ENCODE measurements at regions of chr5 and their contacts with region 1.

Region 1: DNA sequence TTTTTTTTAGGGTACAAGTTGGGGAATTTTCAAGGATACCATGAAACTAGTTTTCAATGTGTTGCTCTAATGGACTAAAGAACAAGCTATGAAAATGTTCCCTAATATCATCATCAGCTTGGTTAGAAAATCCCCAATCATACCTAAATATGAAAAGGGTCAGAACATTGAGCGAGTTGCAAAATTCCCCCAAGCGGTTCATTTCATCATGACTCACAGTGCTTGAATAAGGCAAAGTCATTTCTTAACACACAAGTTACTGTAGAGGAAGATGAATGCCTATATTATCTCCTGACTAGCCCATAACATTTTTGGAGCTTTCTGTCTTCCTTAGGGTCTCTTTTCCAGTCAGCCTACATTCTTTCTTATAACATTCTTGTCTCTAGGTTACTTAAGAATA is 62.7 kb downstream of the ST8SIA4 start:
- DNase-seq: no peak
- ATAC-seq: no peak
- H3K4me3 ChIP-seq: no peak overlapping the region
- H3K27ac ChIP-seq: no peak overlapping the region
- H3K4me1 ChIP-seq: no peaks in the 10 kb centered on the region
- H3K27me3 ChIP-seq: no peaks in the 10 kb centered on the region

Region 2: GRCh38 chr5:100890461-100891008 is 50.2 kb after region 1 on chr5:
- intact Hi-C with region 1: loop called in 1 of 4 experiments (anchors 10 kb)
- DNase-seq: no peak
- ATAC-seq: no peak
- H3K4me3 ChIP-seq: peak overlapping the region; percentile 56
- H3K27ac ChIP-seq: no peak overlapping the region
- H3K4me1 ChIP-seq: peaks cover 2% of the 10 kb centered on the region
- H3K27me3 ChIP-seq: no peaks in the 10 kb centered on the region